ENCODE measurements at regions of chr16 and their contacts with region 1.

Region 1: GRCh38 chr16:56600398-56600999 is 7.9 kb upstream of the MT2A start:
- DNase-seq: peak; percentile 66
- H3K4me3 Mint-ChIP-seq: no peak overlapping the region
- H3K27ac Mint-ChIP-seq: no peak overlapping the region
- H3K4me1 Mint-ChIP-seq: peaks cover 10% of the 10 kb centered on the region
- H3K27me3 Mint-ChIP-seq: peaks cover 56% of the 10 kb centered on the region
- CTCF ChIP-seq: peak; percentile 65

Region 2: DNA sequence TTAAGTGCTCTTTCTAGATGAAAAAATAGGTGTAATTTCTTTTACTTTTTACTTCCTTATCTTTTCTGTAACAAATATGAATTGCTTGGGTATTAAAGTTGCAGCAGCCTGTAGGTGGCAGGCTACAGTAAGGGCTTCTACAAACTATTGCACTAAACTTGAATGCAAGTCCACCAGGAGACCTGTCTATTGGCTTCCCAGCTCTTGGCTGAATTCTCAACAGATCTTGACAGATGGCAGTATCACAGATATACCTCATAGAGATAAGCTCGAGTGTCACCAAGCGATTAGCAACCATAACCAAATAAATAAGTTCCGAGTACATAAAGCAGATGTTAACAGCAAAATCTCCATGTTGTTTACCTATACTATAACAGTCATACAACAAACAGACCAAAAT is 86.5 kb before region 1 on chr16:
- CTCF ChIA-PET with region 1: interaction called, 17 read pairs
- intact Hi-C with region 1: loop called (anchors 1 kb)
- DNase-seq: peak; percentile 59
- H3K4me3 Mint-ChIP-seq: no peak overlapping the region
- H3K27ac Mint-ChIP-seq: no peak overlapping the region
- H3K4me1 Mint-ChIP-seq: peaks cover 7% of the 10 kb centered on the region
- H3K27me3 Mint-ChIP-seq: no peaks in the 10 kb centered on the region
- CTCF ChIP-seq: peak; percentile 52

Region 3: DNA sequence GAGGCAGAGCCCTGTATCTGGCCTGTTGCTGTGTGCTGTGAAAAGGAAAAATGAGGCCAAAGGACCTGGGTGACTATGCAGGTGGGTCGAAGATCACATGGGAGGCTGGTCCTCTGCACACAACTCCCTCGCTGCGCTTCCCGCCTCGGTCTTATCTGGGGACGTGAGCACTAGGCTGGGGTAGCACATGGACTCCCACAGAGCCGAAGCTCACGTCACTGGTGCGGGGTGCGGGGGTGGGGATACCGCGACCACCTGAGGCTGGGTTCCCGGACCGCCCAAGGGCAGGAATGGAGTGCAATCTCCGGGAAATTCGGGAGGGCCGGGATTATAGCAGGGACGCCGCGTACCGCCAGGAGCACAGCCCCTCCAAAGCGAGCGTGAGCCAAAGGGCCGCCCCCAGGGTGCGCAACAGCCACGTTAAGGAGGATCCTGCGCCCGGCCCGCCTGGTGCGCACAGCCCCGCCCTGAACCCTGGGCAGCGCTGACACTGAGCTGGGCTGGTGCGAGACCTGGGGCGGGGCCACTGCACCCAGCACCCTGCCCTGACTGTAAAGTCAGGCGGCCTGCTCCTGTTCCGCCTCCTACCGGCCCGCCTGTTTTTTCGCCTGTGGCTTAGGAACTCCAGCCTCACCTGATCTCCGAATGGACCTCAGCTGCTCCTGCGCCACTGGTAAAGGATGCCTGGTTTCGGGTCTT is 42.7 kb after region 1 on chr16:
- CTCF ChIA-PET with region 1: interaction called, 17 read pairs
- intact Hi-C with region 1: no loop called
- DNase-seq: peak; percentile 86
- H3K4me3 Mint-ChIP-seq: peak overlapping the region; percentile 60
- H3K27ac Mint-ChIP-seq: peak overlapping the region; percentile 39
- H3K4me1 Mint-ChIP-seq: peaks cover 21% of the 10 kb centered on the region
- H3K27me3 Mint-ChIP-seq: peaks cover 99% of the 10 kb centered on the region
- CTCF ChIP-seq: peak; percentile 70

Region 4: DNA sequence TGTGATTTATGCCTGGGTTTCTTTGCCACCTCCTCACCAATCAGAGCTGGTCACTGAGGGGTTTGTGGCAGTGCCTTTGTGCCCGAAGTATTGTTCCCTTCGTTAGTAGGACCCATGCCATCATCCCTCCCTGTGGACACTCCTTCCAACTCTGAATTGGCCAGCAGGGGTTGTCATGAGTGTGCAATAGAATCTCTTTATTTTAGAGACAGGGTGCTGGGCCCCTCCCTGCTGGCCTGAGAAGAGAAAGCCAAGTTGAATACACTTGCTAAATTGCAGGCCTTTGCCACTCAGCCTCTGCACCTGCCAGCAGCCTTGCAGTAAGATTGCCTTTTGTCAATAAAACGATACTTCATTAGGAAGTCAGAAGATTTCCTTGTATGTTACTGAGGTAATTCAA is 223.8 kb after region 1 on chr16:
- CTCF ChIA-PET with region 1: no interaction called
- intact Hi-C with region 1: no loop called
- DNase-seq: no peak
- H3K4me3 Mint-ChIP-seq: no peak overlapping the region
- H3K27ac Mint-ChIP-seq: no peak overlapping the region
- H3K4me1 Mint-ChIP-seq: no peaks in the 10 kb centered on the region
- H3K27me3 Mint-ChIP-seq: no peaks in the 10 kb centered on the region
- CTCF ChIP-seq: no peak

Region 5: GRCh38 chr16:56923446-56924091 is 323.1 kb after region 1 on chr16:
- CTCF ChIA-PET with region 1: no interaction called
- intact Hi-C with region 1: no loop called
- DNase-seq: no peak
- H3K4me3 Mint-ChIP-seq: no peak overlapping the region
- H3K27ac Mint-ChIP-seq: no peak overlapping the region
- H3K4me1 Mint-ChIP-seq: peaks cover 8% of the 10 kb centered on the region
- H3K27me3 Mint-ChIP-seq: peaks cover 36% of the 10 kb centered on the region
- CTCF ChIP-seq: no peak

Measured in Calu3 (cell line).